Heart left ventricle (tissue), 16 donors: ENCODE measurements at regions of chr7 and their contacts with region 1.

Region 1: DNA sequence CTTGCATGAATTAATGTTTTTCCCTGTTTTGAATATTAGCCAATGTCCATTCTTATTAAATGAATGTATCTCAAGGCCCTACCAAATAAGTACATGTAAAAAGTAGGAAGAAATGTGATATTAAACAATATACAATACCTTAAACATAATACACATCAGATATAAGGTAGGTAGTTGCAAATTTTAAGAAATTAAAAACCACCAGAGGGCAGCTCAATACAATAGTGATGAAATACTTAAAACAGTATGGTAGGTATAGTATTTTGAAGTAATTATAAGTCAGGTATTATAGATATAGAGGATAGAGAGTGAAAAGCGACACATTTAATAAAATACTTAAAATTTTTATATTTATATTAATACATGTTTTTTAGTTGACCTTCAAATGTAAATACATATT is 43.6 kb upstream of the CDK14 start:
- DNase-seq: no peak
- ATAC-seq: peak in 1 of 4 donors; percentile 57
- H3K4me3 ChIP-seq: no peak overlapping the region
- H3K27ac ChIP-seq: no peak overlapping the region
- H3K4me1 ChIP-seq: no peaks in the 10 kb centered on the region
- H3K27me3 ChIP-seq: no peaks in the 10 kb centered on the region
- CTCF ChIP-seq: peak in 11 of 12 donors; percentile 18 to 63 (median 49)
- POLR2A ChIP-seq: no peak

Region 2: DNA sequence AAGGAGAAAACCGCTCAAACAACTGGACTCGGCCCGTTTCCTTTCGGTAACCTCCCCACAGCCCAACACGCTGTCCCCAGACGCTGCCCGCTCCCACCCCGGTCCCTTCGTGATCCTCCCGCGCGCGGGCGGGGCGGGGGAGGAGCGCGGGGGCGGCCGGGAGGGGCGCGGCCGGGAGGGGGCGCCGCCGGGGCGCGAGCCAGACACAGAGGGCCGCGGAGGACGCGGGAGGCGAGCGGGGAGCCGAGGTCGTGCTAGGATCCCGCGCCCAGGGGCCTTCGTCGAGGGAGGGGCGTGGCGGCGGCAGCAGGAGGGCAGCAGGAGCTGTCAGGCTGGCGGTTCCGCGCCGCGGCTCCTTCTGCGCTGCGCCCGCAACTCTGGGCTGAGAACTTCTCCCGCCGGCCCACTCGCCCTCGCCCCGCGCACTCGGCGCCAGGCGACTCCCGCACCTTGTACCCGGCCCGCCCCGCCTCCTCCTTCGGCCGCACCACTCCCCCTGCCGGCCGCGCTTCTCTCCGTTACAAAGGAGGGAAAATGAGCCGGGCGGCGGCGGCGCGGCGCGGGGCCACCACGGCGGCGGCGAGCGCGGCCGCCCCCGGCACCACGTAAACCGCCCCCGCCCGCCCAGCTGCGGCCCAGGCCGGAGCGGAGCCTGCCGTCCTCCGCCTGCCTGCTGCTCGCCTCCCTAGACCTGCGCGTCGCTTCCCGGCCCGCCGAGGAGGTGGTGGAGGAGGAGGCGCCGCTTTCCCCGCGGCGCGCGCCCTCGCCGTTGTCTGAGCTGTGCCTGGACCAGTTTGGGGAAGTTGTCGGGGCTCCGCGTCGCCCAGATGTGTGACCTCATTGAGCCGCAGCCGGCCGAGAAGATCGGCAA is 43.5 kb after region 1 on chr7 and contains the start of gene CDK14:
- intact Hi-C with region 1: loop called in 1 of 10 experiments (anchors 5 kb)
- DNase-seq: peak; percentile 78 to 90 (median 85)
- ATAC-seq: peak; percentile 35 to 84 (median 68)
- H3K4me3 ChIP-seq: peak within 1 kb of the TSS; percentile 73 to 93 (median 85)
- H3K27ac ChIP-seq: peak within 1 kb of the TSS; percentile 80 to 88 (median 84)
- H3K4me1 ChIP-seq: peaks cover 0 to 37% (median 15%) of the 10 kb centered on the region in 12 donors
- H3K27me3 ChIP-seq: no peaks in the 10 kb centered on the region
- CTCF ChIP-seq: peak; percentile 24 to 60 (median 49)
- POLR2A ChIP-seq: no peak
- total RNA-seq, gene CDK14: 12.2 to 37.7 (median 26.3) TPM